Activated CD4-positive, alpha-beta T cell treated with anti-CD3 and anti-CD28 coated beads, Interleukin-2, amount 10 ng/mL, durations not matched to agents 24 days and 14 days (primary cell): ENCODE measurements at regions of chr20 and their contacts with region 1.

Region 1: GRCh38 chr20:49186535-49187329 is 1.4 kb downstream of the STAU1 start:
- DNase-seq: peak; percentile 91
- H3K4me3 Mint-ChIP-seq: peak overlapping the region; percentile 95
- H3K27ac Mint-ChIP-seq: peak overlapping the region; percentile 84
- H3K4me1 Mint-ChIP-seq: peaks cover 46% of the 10 kb centered on the region
- H3K27me3 Mint-ChIP-seq: peaks cover 3% of the 10 kb centered on the region

Region 2: GRCh38 chr20:49046087-49046900 is 140.4 kb before region 1 on chr20 and contains the start of gene CSE1L:
- intact Hi-C with region 1: loop called (anchors 1 kb)
- DNase-seq: peak; percentile 99
- H3K4me3 Mint-ChIP-seq: peak within 1 kb of the TSS; percentile 99
- H3K27ac Mint-ChIP-seq: peak within 1 kb of the TSS; percentile 100
- H3K4me1 Mint-ChIP-seq: peaks cover 28% of the 10 kb centered on the region
- H3K27me3 Mint-ChIP-seq: no peaks in the 10 kb centered on the region
- total RNA-seq, gene CSE1L: 135 and 136 TPM in 2 replicates

Region 3: DNA sequence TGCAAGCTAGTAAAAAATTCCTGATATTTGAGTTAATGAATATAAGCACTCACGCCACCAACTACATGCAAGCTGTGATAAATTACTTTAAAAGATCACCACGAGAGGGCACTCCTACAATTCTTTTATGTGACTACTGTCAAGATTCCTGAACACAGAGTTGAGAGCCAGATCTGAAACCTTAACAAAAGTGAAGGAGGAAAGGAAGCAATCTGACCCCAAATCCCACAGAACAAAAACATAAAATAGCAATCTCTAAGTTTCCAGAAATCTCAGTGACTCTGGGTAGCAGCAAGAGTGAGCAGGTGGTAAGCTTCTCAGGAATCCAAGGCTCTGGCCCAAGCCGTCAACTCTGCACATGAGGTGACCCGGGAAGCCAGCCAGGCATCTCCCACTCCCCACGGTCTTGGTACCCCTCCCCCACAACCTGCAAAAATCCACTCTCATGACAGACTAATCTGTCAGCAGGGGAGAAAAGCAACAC is 53.7 kb before region 1 on chr20:
- intact Hi-C with region 1: loop called (anchors 5 kb)
- DNase-seq: peak; percentile 80
- H3K4me3 Mint-ChIP-seq: no peak overlapping the region
- H3K27ac Mint-ChIP-seq: peak overlapping the region; percentile 2
- H3K4me1 Mint-ChIP-seq: peaks cover 10% of the 10 kb centered on the region
- H3K27me3 Mint-ChIP-seq: no peaks in the 10 kb centered on the region

Region 4: DNA sequence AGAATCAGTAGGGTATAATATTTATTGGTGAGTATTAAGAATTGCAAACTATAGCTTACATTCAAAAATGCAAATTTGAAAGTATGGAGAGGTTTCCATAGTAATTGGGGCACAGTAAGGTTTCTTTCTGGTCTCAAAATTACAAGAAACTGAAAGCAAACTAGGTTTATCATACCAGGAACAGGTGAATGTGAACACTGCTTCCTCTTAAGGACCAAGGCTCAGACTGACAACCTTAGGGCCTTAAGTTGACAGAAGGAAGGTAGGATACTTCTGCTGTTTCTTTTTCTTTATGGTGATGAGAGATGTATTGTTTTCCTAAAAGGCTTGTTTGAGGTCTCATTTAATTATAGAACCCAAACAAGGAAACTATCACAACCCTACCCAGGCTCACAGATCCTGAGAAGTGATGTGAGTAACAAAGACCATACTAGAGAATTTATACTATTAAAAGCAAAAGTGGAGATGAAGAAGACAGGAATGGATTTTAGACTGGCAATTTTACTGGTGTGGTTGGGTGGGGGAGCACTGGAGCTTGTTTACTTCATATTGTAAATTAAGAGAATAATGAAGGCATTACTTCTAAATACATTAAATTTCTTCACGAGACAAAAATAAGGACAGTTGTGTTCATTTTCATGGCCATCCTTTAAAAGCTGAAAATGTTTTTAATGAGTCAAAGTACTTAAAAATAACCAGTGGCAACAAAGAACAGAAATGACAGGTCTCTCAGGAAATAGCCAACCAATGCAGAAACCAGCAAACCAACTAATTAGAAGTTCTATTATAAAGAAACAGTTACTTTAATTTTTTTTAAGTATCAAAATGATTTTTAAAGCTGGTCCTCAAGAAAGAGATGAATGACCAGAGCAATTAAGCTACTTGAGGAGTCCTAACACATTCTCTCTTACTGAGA is 19.9 kb before region 1 on chr20:
- intact Hi-C with region 1: loop called (anchors 2 kb)
- DNase-seq: peak; percentile 69
- H3K4me3 Mint-ChIP-seq: peak overlapping the region; percentile 72
- H3K27ac Mint-ChIP-seq: peak overlapping the region; percentile 90
- H3K4me1 Mint-ChIP-seq: peaks cover 49% of the 10 kb centered on the region
- H3K27me3 Mint-ChIP-seq: no peaks in the 10 kb centered on the region

Region 5: DNA sequence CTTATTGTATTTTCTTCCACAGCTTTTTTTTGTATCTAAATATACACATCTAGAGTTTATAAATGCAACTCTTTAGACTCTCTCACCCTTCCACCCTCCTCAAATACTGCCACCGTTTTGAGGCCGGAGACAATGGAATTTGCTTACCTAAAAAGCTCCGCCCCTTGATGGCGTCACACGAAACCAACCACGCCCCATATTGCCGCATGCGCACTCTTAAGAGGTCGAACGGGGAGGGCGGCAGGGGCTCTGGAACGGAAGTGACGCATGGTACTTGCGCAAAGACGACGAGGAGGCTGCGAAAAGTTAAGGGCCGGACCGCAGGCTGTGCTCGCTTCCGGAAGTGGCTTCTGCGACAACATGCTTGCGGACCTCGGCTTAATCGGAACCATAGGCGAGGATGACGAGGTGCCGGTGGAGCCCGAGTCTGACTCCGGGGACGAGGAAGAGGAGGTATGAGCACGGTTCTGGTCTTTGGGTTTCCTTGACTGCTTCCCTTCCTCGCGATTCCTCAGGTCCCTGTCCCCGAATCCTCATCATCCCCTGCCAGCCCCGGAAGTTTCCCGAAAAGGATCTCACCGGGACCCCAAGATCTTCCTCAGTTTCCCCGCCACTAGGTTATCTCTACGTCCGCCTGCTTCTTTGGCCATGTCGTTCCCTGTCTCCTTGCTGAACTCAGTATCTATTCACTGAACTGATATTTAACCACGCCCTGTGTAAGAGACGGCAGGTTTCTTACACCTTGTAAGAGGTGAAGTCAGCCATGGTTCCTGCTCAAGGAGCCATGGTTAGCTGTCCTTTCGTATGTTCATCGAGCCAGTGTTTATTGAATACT is 32.6 kb after region 1 on chr20 and contains the start of gene DDX27:
- intact Hi-C with region 1: loop called (anchors 1 kb)
- DNase-seq: peak; percentile 99
- H3K4me3 Mint-ChIP-seq: peak within 1 kb of the TSS; percentile 94
- H3K27ac Mint-ChIP-seq: peak within 1 kb of the TSS; percentile 97
- H3K4me1 Mint-ChIP-seq: peaks cover 18% of the 10 kb centered on the region
- H3K27me3 Mint-ChIP-seq: peaks cover 4% of the 10 kb centered on the region
- total RNA-seq, gene DDX27: 56.5 and 56.9 TPM in 2 replicates

Region 6: DNA sequence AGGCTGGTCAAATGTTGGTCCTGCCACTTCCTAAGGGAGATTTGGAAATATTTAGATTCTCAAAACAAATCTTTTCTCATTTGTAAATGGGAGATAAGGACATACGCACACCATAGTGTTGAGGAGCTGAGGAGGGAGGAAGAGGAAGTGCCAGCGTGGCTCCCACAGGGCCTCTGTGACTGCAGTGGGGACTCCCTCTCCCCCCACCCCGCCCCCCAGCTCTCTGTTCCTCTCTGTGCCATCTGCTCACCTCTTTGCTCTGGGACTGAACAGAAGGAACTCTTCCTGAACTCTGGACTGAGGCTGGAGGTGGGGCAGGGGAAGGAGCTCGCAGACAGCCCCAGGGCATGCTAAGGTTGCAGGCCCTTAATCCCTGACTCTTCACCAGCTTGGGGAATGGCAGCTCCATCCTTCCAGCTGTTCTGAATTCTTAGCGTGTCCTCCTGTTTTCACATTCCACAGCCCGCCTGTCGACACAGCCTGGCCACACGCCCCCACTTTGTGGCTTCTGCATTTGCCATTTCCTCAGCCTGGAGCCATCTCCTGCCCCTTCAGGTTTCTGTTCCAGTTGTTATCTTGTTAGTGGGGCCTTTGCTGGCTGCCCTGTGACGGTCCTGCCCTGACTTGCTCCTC is 43.9 kb after region 1 on chr20:
- intact Hi-C with region 1: no loop called
- DNase-seq: no peak
- H3K4me3 Mint-ChIP-seq: no peak overlapping the region
- H3K27ac Mint-ChIP-seq: peak overlapping the region; percentile 42
- H3K4me1 Mint-ChIP-seq: peaks cover 5% of the 10 kb centered on the region
- H3K27me3 Mint-ChIP-seq: no peaks in the 10 kb centered on the region

Region 7: GRCh38 chr20:49267327-49267726 is 80.6 kb after region 1 on chr20:
- intact Hi-C with region 1: no loop called
- DNase-seq: no peak
- H3K4me3 Mint-ChIP-seq: peak overlapping the region; percentile 85
- H3K27ac Mint-ChIP-seq: peak overlapping the region; percentile 62
- H3K4me1 Mint-ChIP-seq: peaks cover 54% of the 10 kb centered on the region
- H3K27me3 Mint-ChIP-seq: no peaks in the 10 kb centered on the region

Region 8: GRCh38 chr20:49349694-49350093 is 163.0 kb after region 1 on chr20:
- intact Hi-C with region 1: no loop called
- DNase-seq: no peak
- H3K4me3 Mint-ChIP-seq: no peak overlapping the region
- H3K27ac Mint-ChIP-seq: no peak overlapping the region
- H3K4me1 Mint-ChIP-seq: peaks cover 2% of the 10 kb centered on the region
- H3K27me3 Mint-ChIP-seq: peaks cover 36% of the 10 kb centered on the region